ENCODE measurements at regions of chr15 and their contacts with region 1.

Region 1: GRCh38 chr15:89874926-89875564 is 18.7 kb downstream of the AP3S2 start:
- DNase-seq: no peak
- ATAC-seq: peak; percentile 100
- H3K4me3 ChIP-seq: no peak overlapping the region
- H3K27ac ChIP-seq: no peak overlapping the region
- H3K4me1 ChIP-seq: no peaks in the 10 kb centered on the region
- H3K27me3 ChIP-seq: no peaks in the 10 kb centered on the region
- CTCF ChIP-seq: peak; percentile 92 to 98 (median 97)
- EP300 ChIP-seq: no peak
- POLR2A ChIP-seq: no peak
- RAD21 ChIP-seq: peak; percentile 84

Region 2: GRCh38 chr15:89728254-89728653 is 146.8 kb before region 1 on chr15:
- CTCF ChIA-PET with region 1: interaction called, 19 read pairs
- POLR2A ChIA-PET with region 1: no interaction called
- RAD21 ChIA-PET with region 1: interaction called, 4 read pairs
- SMC1A ChIA-PET with region 1: interaction called, 3 read pairs
- in situ Hi-C with region 1: no loop called
- intact Hi-C with region 1: no loop called
- DNase-seq: no peak
- ATAC-seq: no peak
- H3K4me3 ChIP-seq: no peak overlapping the region
- H3K27ac ChIP-seq: no peak overlapping the region
- H3K4me1 ChIP-seq: no peaks in the 10 kb centered on the region
- H3K27me3 ChIP-seq: no peaks in the 10 kb centered on the region; a peak in 1 of 4 replicates
- CTCF ChIP-seq: no peak
- EP300 ChIP-seq: no peak
- POLR2A ChIP-seq: no peak
- RAD21 ChIP-seq: no peak

Region 3: DNA sequence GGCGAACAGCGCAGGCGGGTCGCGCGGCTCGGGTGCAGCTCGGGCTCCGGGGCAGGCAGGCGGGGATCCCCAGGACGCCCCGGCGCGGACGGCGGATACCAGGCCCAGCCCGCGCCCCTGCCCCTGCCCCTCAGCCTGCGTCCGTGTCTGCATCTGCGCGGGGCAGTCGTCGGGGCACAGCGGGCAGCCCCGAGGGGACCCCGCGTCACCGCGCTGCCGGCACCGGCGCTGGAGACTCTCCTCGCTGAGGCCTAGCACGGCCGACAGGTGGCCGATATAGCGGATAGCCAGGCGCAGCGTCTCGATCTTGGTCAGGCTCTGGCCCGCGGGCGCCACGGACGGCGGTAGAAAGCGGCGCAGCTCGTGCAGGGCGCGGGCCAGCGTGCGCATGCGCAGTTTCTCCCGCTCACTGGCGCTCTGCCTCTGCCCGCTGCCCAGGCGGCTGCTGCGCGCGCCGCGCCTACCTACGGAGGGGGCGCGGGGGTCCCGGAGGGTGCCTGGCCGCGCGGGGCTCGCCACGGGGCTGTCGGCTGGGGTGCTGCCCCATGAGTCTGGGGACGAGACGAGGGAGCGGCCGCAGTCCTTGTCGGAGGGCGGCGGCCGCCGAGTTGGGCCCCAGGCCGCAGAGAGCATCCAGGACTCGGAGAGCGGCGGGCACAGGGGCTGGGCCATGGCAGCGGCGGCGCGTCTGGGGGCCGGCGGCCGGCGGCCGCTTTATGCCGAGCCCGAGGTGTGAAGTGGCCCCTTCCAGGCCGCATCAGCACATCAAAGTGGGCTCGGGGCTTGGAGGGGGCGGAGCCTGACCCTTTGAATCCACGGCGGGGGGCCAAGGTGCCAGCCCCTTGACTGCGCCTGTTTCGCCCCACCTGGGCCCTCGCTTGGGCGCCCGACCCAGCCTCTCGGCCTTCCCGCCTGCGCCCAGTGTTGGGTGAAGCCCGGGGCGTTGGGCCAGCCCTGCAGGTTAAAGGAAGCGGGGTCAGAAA is 124.2 kb before region 1 on chr15 and contains the start of gene MESP1:
- CTCF ChIA-PET with region 1: interaction called, 380 read pairs
- POLR2A ChIA-PET with region 1: no interaction called
- RAD21 ChIA-PET with region 1: interaction called, 4 read pairs
- SMC1A ChIA-PET with region 1: interaction called, 11 read pairs
- in situ Hi-C with region 1: loop called (anchors 5 kb)
- intact Hi-C with region 1: no loop called
- DNase-seq: peak; percentile 51
- ATAC-seq: peak; percentile 98
- H3K4me3 ChIP-seq: peak within 1 kb of the TSS; percentile 65
- H3K27ac ChIP-seq: no peak within 1 kb of the TSS
- H3K4me1 ChIP-seq: peaks cover 9% of the 10 kb centered on the region
- H3K27me3 ChIP-seq: peaks cover 0 to 4% of the 10 kb centered on the region in 2 experiments; a peak in 2 of 4 replicates
- CTCF ChIP-seq: peak; percentile 52 to 76 (median 74)
- EP300 ChIP-seq: no peak
- POLR2A ChIP-seq: no peak; the same call in none of the 2 replicates
- RAD21 ChIP-seq: no peak; the same call in 1 of the 2 replicates
- polyA plus RNA-seq, gene MESP1: not detected

Region 4: GRCh38 chr15:89768060-89768500 is 107.0 kb before region 1 on chr15:
- CTCF ChIA-PET with region 1: interaction called, 380 read pairs
- POLR2A ChIA-PET with region 1: no interaction called
- RAD21 ChIA-PET with region 1: interaction called, 179 read pairs
- SMC1A ChIA-PET with region 1: interaction called, 132 read pairs
- in situ Hi-C with region 1: no loop called
- intact Hi-C with region 1: no loop called
- DNase-seq: no peak
- ATAC-seq: peak; percentile 21; the same call in 1 of the 3 replicates
- H3K4me3 ChIP-seq: no peak overlapping the region
- H3K27ac ChIP-seq: no peak overlapping the region
- H3K4me1 ChIP-seq: no peaks in the 10 kb centered on the region
- H3K27me3 ChIP-seq: no peaks in the 10 kb centered on the region
- CTCF ChIP-seq: no peak
- EP300 ChIP-seq: no peak
- POLR2A ChIP-seq: no peak
- RAD21 ChIP-seq: no peak

Region 5: GRCh38 chr15:89851673-89852341 is 23.2 kb before region 1 on chr15:
- CTCF ChIA-PET with region 1: interaction called, 13 read pairs
- POLR2A ChIA-PET with region 1: interaction called, 3 read pairs
- RAD21 ChIA-PET with region 1: interaction called, 5 read pairs
- SMC1A ChIA-PET with region 1: interaction called, 10 read pairs
- in situ Hi-C with region 1: no loop called
- intact Hi-C with region 1: no loop called
- DNase-seq: peak; percentile 30
- ATAC-seq: peak; percentile 91
- H3K4me3 ChIP-seq: no peak overlapping the region
- H3K27ac ChIP-seq: peak overlapping the region; percentile 85
- H3K4me1 ChIP-seq: peaks cover 45% of the 10 kb centered on the region
- H3K27me3 ChIP-seq: no peaks in the 10 kb centered on the region
- CTCF ChIP-seq: no peak
- EP300 ChIP-seq: no peak
- POLR2A ChIP-seq: no peak
- RAD21 ChIP-seq: no peak

Region 6: DNA sequence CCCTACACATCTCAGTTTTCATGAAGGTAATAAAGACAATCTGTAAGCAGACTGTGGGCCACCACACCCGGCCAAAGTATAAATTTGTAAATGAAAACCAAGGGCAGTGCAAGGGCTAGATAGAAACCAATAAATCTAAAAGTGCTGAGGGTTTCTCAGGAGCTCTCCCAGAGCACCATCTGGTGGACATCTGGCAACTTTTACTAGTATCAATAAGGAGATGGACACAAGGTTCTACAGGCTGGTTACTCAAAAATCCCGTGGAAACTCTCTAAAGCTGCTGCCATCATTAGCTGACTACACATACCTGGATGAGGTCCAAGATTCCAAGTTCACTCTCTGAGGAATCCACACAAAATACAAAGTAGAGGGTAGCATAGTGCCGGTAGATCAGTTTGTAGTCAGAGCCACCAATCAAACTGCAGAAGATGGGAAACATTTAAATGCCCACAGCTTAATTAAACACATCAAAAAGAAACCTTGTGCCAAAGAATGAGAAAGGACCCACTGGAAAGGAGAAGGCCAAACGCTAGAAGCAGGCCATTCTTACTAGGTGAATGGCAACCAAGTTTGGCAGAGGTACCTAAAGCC is 13.3 kb after region 1 on chr15:
- CTCF ChIA-PET with region 1: interaction called, 112 read pairs
- POLR2A ChIA-PET with region 1: interaction called, 3 read pairs
- RAD21 ChIA-PET with region 1: interaction called, 14 read pairs
- SMC1A ChIA-PET with region 1: interaction called, 15 read pairs
- in situ Hi-C with region 1: no loop called
- intact Hi-C with region 1: no loop called
- DNase-seq: no peak
- ATAC-seq: peak; percentile 55; the same call in 2 of the 3 replicates
- H3K4me3 ChIP-seq: no peak overlapping the region
- H3K27ac ChIP-seq: no peak overlapping the region
- H3K4me1 ChIP-seq: peaks cover 14% of the 10 kb centered on the region
- H3K27me3 ChIP-seq: no peaks in the 10 kb centered on the region
- CTCF ChIP-seq: peak; percentile 32 to 38 (median 35); a peak in 3 of 6 replicates
- EP300 ChIP-seq: no peak
- POLR2A ChIP-seq: no peak
- RAD21 ChIP-seq: peak; percentile 46

Region 7: GRCh38 chr15:90071208-90071807 is 196.3 kb after region 1 on chr15:
- CTCF ChIA-PET with region 1: interaction called, 17 read pairs
- POLR2A ChIA-PET with region 1: no interaction called
- RAD21 ChIA-PET with region 1: interaction called, 7 read pairs
- SMC1A ChIA-PET with region 1: interaction called, 5 read pairs
- in situ Hi-C with region 1: no loop called
- intact Hi-C with region 1: no loop called
- DNase-seq: peak; percentile 54
- ATAC-seq: peak; percentile 98
- H3K4me3 ChIP-seq: no peak overlapping the region
- H3K27ac ChIP-seq: no peak overlapping the region
- H3K4me1 ChIP-seq: no peaks in the 10 kb centered on the region
- H3K27me3 ChIP-seq: no peaks in the 10 kb centered on the region
- CTCF ChIP-seq: peak; percentile 79 to 89 (median 81)
- EP300 ChIP-seq: no peak
- POLR2A ChIP-seq: no peak
- RAD21 ChIP-seq: peak; percentile 95

Region 8: DNA sequence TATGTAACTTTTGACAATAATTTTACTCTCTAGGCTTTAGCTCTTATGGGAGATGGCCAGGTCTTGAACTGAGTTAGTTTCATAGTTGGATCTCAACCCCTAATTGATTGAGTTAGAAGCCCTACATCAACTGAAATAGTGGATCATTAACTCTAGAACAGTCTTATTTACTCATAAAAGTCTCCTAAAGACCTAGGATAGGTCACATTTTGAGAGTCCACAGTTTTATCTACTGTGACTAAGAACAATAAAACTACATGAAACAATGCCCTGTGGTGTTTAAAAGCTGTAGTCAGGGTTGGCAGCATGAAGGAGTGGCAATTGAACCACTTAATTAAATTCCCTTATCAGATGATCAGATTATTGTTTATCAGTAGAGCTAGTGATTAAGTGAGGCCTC is 249.4 kb after region 1 on chr15:
- CTCF ChIA-PET with region 1: no interaction called
- POLR2A ChIA-PET with region 1: no interaction called
- RAD21 ChIA-PET with region 1: no interaction called
- SMC1A ChIA-PET with region 1: no interaction called
- in situ Hi-C with region 1: no loop called
- intact Hi-C with region 1: no loop called
- DNase-seq: no peak
- ATAC-seq: no peak
- H3K4me3 ChIP-seq: no peak overlapping the region
- H3K27ac ChIP-seq: no peak overlapping the region
- H3K4me1 ChIP-seq: no peaks in the 10 kb centered on the region
- H3K27me3 ChIP-seq: no peaks in the 10 kb centered on the region
- CTCF ChIP-seq: no peak
- EP300 ChIP-seq: no peak
- POLR2A ChIP-seq: no peak
- RAD21 ChIP-seq: no peak